Heart left ventricle (tissue), 16 donors: ENCODE measurements at regions of chr10 and their contacts with region 1.

Region 1: DNA sequence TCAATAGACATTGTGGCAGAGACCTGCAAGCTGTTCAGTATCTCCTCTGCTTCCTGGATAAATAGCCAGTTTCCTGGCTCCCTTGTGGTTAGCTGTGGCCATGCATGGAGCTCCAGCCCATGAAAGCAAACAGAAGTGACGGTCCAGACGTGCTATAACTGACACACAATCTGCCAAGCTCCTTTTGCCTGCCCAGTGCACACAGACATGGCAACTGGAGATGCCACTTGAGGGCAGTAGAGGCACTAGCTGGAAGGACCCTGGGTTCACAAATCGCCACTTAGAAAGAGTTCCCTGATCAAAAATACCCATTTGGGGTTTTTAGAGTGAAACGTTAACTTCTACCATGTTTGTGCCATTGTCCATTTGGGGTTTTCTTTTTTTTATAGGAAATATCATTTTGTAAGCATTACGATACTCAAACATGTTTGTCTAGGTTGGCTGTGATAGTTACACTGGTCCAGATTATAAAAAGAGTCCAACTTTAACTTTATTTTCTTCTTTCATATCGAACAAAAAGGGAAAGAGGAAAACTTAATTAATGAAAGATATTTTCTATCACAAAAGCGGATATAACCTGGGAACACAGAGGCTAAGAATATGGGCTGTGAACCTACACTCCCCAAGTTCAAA is 31.3 kb downstream of the KIN start:
- DNase-seq: no peak
- ATAC-seq: peak in 2 of 4 donors; percentile 39 to 52
- H3K4me3 ChIP-seq: no peak overlapping the region
- H3K27ac ChIP-seq: no peak overlapping the region
- H3K4me1 ChIP-seq: no peaks in the 10 kb centered on the region
- H3K27me3 ChIP-seq: no peaks in the 10 kb centered on the region
- CTCF ChIP-seq: peak; percentile 20 to 65 (median 42)
- POLR2A ChIP-seq: no peak

Region 2: DNA sequence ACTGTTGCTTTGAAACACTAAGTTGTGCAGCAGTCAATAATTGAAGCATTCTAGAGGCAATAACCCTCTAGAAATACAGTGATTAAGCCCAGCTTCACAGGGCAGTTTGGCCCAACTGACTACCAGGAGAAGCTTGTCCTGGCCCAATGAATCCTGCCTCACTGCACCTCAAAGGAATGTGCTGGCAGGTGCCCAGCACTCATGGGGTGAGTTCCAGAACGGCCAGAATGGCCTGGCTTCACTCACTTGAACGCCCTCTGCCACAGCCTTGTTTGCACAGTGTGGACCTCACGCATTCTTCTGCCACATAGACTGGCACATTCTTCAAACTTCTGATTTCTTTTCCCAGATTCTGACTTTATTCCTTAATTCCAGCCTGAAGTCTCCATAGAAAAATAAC is 59.9 kb before region 1 on chr10:
- intact Hi-C with region 1: no loop called
- DNase-seq: peak in 4 of 5 donors; percentile 31 to 79 (median 44)
- ATAC-seq: peak; percentile 89 to 95 (median 92)
- H3K4me3 ChIP-seq: no peak overlapping the region
- H3K27ac ChIP-seq: no peak overlapping the region
- H3K4me1 ChIP-seq: peaks cover 0 to 5% (median 0%) of the 10 kb centered on the region in 12 donors
- H3K27me3 ChIP-seq: no peaks in the 10 kb centered on the region
- CTCF ChIP-seq: no peak
- POLR2A ChIP-seq: no peak

Region 3: GRCh38 chr10:8852546-8852945 is 1096.1 kb after region 1 on chr10:
- intact Hi-C with region 1: no loop called
- DNase-seq: no peak
- ATAC-seq: no peak
- H3K4me3 ChIP-seq: no peak overlapping the region
- H3K27ac ChIP-seq: no peak overlapping the region
- H3K4me1 ChIP-seq: no peaks in the 10 kb centered on the region
- H3K27me3 ChIP-seq: peaks cover 0 to 4% (median 0%) of the 10 kb centered on the region in 9 donors
- CTCF ChIP-seq: no peak
- POLR2A ChIP-seq: no peak

Region 4: GRCh38 chr10:9302120-9302746 is 1545.8 kb after region 1 on chr10:
- intact Hi-C with region 1: loop called in 1 of 10 experiments (anchors 10 kb)
- DNase-seq: no peak
- ATAC-seq: peak in 1 of 4 donors; percentile 45
- H3K4me3 ChIP-seq: no peak overlapping the region
- H3K27ac ChIP-seq: no peak overlapping the region
- H3K4me1 ChIP-seq: no peaks in the 10 kb centered on the region
- H3K27me3 ChIP-seq: peaks cover 0 to 5% (median 0%) of the 10 kb centered on the region in 9 donors
- CTCF ChIP-seq: peak; percentile 14 to 56 (median 44)
- POLR2A ChIP-seq: no peak